Activated naive CD4-positive, alpha-beta T cell treated with anti-CD3 and anti-CD28 coated beads for 36 hours (primary cell): ENCODE measurements at regions of chr2 and their contacts with region 1.

Region 1: DNA sequence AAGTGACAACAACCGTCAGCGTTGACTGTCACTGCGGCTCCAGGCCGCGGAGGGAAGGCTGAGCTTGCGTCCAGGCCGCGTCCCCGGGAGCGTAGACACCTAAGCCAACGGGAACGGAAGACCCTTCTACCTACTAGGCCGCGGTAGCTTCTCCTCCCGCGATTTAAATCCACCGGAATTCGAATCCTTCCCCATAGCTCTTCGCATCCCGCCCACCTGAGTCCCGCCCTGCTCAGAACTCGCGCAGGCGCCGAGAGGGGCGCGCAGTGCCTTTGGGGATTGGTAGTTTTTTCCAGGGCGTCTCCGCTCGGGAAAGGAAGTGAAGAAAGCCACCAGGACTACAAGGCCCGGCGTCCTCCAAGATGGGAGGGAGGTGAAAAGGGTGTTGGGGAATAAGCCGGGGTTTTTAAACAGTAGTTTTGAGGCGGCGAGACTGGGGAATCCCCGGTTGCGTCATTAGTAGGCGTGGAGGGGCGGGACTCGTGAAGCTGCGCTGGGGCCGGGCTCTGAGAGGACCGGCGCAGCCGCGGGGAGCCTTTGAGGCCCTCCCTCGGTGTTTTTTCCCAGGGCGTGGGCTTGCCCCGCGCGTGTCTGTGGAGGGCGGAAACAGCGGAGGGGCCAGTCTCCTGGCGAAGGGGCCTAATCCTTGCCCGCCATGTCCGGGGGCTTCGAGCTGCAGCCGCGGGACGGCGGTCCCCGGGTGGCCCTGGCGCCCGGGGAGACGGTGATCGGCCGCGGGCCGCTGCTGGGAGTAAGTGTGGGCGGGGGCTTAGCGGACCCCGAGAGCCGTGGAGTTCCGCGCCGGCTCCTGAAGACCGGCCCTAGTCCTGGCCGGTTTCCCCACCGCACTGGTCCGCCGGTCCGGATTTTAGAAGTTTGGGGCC is at the starts of genes APLF and FBXO48:
- DNase-seq: peak; percentile 99
- H3K4me3 Mint-ChIP-seq: peak within 1 kb of the TSS; percentile 94
- H3K27ac Mint-ChIP-seq: peak within 1 kb of the TSS; percentile 93
- H3K4me1 Mint-ChIP-seq: peaks cover 40% of the 10 kb centered on the region
- H3K27me3 Mint-ChIP-seq: no peaks in the 10 kb centered on the region
- total RNA-seq, gene APLF: 2.4 to 2.7 TPM
- total RNA-seq, gene FBXO48: 1.1 to 1.2 TPM

Region 2: GRCh38 chr2:67650291-67651133 is 816.8 kb before region 1 on chr2:
- CTCF ChIA-PET with region 1: no interaction called
- intact Hi-C with region 1: no loop called
- DNase-seq: peak; percentile 19
- H3K4me3 Mint-ChIP-seq: no peak overlapping the region
- H3K27ac Mint-ChIP-seq: no peak overlapping the region
- H3K4me1 Mint-ChIP-seq: no peaks in the 10 kb centered on the region
- H3K27me3 Mint-ChIP-seq: peaks cover 6% of the 10 kb centered on the region

Region 3: GRCh38 chr2:68062680-68063387 is 404.5 kb before region 1 on chr2 and contains the start of gene C1D:
- CTCF ChIA-PET with region 1: no interaction called
- intact Hi-C with region 1: loop called (anchors 1 kb)
- DNase-seq: peak; percentile 96
- H3K4me3 Mint-ChIP-seq: peak within 1 kb of the TSS; percentile 89
- H3K27ac Mint-ChIP-seq: peak within 1 kb of the TSS; percentile 93
- H3K4me1 Mint-ChIP-seq: peaks cover 33% of the 10 kb centered on the region
- H3K27me3 Mint-ChIP-seq: no peaks in the 10 kb centered on the region
- total RNA-seq, gene C1D: 19.0 to 21.4 TPM

Region 4: DNA sequence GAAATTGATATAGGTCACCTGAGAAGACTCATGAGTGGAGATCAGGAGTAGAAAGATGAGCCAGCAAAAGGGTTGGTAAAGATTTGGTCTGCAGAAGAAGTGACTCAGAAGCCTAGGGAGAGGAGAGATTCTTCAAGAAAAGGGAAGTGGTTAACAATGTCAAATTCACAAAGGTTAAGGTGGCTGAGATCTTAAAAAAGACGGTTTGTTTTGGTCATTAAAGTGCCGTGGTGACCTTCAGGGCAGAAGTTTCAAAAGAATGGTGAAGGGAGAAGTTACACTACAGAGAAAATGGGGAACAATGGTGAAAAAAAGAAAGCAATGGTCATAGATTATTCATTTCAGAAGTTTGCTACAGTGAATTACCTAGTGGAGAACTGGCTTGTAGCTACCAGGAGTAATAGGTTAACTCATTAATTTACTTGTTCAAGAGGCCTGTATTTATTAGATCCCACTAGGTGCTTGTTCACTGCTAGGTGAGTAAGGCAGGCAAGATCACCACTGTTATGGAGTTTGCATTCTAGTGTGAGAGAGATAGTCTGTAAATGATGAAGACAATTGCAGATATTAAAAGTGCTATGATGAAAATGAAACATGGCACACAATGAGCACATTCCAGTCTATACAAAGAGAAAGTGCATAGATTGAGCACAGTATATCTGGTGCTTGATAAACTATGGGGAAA is 43.2 kb before region 1 on chr2:
- CTCF ChIA-PET with region 1: interaction called, 3 read pairs
- intact Hi-C with region 1: loop called (anchors 1 kb)
- DNase-seq: no peak
- H3K4me3 Mint-ChIP-seq: no peak overlapping the region
- H3K27ac Mint-ChIP-seq: no peak overlapping the region
- H3K4me1 Mint-ChIP-seq: no peaks in the 10 kb centered on the region
- H3K27me3 Mint-ChIP-seq: peaks cover 2% of the 10 kb centered on the region

Region 5: GRCh38 chr2:68516051-68516955 is 49.0 kb after region 1 on chr2:
- CTCF ChIA-PET with region 1: no interaction called
- intact Hi-C with region 1: loop called (anchors 5 kb)
- DNase-seq: no peak
- H3K4me3 Mint-ChIP-seq: no peak overlapping the region
- H3K27ac Mint-ChIP-seq: no peak overlapping the region
- H3K4me1 Mint-ChIP-seq: no peaks in the 10 kb centered on the region
- H3K27me3 Mint-ChIP-seq: no peaks in the 10 kb centered on the region

Region 6: DNA sequence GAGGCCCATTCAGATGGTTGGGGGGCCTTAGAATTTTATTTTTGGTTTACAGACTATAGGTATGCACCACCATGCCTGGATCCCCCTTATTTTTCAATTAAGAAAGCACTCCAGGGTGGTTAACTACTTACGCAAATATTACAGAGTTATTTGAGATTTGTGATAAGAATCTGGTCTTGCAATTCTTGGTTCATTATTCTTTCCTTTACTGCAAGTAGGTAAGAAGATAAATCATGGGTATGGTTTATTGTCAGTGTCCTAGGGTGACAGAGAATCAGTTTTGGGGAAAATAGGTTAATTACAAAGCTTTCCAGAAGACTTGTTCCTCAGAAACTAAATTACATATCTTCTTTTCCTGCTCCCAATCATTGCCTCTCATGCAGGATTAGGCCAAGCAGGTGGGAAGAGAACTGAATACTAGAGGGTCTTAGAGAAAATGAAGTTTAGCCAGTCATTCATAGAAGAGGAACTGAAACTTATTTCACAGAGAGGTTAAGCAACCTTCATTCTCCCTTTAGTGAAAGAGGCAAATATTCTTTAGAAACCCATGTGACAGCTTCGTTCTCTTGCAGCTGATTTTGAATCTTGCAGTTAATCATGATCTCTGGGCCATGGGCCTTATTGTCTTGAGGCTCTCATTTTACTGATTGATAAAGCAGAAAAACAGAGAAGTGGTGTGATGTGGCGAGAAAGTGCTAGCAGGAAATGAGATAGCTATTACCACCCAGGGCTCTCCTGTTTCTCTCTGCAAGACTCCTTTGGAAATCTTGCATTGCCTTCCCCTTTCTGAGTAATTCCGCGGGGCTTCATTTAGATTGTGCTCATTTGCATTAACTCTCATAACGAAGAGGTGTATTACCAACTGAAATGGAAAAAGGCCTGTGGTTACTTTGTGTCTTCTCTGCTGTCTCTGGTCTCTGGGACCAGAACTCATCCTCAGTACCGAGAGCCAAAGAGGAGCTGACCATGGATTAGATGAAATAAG is 222.5 kb after region 1 on chr2:
- CTCF ChIA-PET with region 1: interaction called, 5 read pairs
- intact Hi-C with region 1: loop called (anchors 1 kb)
- DNase-seq: peak; percentile 31
- H3K4me3 Mint-ChIP-seq: no peak overlapping the region
- H3K27ac Mint-ChIP-seq: peak overlapping the region; percentile 52
- H3K4me1 Mint-ChIP-seq: peaks cover 21% of the 10 kb centered on the region
- H3K27me3 Mint-ChIP-seq: no peaks in the 10 kb centered on the region

Region 7: DNA sequence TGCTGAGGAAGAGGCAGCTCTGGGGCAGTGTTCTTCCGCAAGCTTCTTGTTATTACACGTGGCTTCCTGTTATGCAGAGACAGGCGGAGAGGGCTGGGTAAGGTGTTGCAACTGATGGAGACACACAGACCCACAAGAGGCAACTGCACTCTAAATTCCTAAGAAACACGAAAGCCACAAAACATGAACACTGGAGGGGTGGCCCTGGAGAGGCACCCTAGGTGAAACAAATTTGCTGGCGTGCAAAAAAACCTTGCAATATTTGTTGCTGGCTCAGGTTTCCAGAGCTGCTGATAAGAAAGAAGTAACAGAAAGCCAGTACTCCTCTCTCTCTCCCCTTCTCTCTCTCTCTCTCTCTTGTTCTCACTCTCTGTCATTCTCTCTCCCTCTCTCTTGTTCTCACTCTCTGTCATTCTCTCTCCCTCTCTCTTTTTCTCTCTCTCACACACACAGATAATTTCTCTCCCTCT is 299.1 kb after region 1 on chr2:
- CTCF ChIA-PET with region 1: interaction called, 8 read pairs
- intact Hi-C with region 1: loop called (anchors 1 kb)
- DNase-seq: peak; percentile 77
- H3K4me3 Mint-ChIP-seq: peak overlapping the region; percentile 77
- H3K27ac Mint-ChIP-seq: peak overlapping the region; percentile 95
- H3K4me1 Mint-ChIP-seq: peaks cover 97% of the 10 kb centered on the region
- H3K27me3 Mint-ChIP-seq: no peaks in the 10 kb centered on the region

Region 8: GRCh38 chr2:68925295-68925896 is 458.1 kb after region 1 on chr2:
- CTCF ChIA-PET with region 1: interaction called, 60 read pairs
- intact Hi-C with region 1: loop called (anchors 1 kb)
- DNase-seq: peak; percentile 76
- H3K4me3 Mint-ChIP-seq: no peak overlapping the region
- H3K27ac Mint-ChIP-seq: no peak overlapping the region
- H3K4me1 Mint-ChIP-seq: no peaks in the 10 kb centered on the region
- H3K27me3 Mint-ChIP-seq: peaks cover 4% of the 10 kb centered on the region